Panc1 (cell line): ENCODE measurements at regions of chr17 and their contacts with region 1.

Region 1: DNA sequence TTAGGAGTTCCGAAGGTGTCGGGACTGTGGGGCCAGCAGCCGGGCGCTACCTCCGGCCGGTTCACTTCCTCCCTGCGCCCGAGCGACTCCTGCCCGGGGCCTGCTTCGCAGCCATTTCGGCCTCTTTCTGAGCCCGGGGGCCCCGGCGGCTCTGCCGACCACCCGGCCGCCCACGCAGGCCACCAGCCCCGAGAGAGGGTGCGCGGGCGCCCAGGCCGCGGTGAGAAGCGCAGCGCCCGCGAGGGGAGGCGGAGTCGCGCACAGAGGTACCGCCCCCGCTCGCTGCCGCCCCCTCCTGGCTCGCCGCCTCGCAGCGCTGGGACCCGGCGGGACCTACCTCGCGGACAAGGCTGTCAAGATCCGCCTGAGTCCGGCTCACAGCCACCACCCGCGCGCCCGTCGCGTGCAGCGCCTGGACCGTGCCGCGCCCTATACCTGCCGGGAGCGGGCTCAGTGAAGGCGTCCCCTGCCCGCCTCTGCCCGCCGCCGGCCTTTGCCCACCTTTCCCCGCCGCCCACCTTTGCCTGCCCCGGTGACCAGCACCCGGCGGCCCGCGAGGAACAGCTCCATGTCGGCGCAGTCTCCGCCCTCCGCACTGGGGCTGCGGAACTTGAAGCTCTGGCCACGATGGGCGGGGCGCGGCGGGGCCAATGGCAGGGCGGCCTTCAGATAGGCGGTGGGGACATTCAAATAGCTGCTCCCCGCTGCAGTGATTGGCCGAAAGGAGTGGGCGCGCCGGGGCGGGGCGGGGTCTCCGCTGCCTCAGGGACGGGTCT is at the start of gene DCXR:
- DNase-seq: peak; percentile 46
- ATAC-seq: peak; percentile 96
- H3K4me3 ChIP-seq: peak within 1 kb of the TSS; percentile 58 to 79
- H3K27ac ChIP-seq: peak within 1 kb of the TSS; percentile 83
- H3K4me1 ChIP-seq: peaks cover 16% of the 10 kb centered on the region
- H3K27me3 ChIP-seq: no peaks in the 10 kb centered on the region
- CTCF ChIP-seq: peak; percentile 99
- total RNA-seq, gene DCXR: 128 TPM

Region 2: GRCh38 chr17:81702971-81703746 is 334.1 kb before region 1 on chr17 and contains the start of gene MRPL12:
- CTCF ChIA-PET with region 1: no interaction called
- POLR2A ChIA-PET with region 1: no interaction called
- in situ Hi-C with region 1: no loop called
- intact Hi-C with region 1: no loop called
- DNase-seq: no peak
- ATAC-seq: peak; percentile 85
- H3K4me3 ChIP-seq: peak within 1 kb of the TSS; percentile 96 to 98
- H3K27ac ChIP-seq: peak within 1 kb of the TSS; percentile 96
- H3K4me1 ChIP-seq: peaks cover 17% of the 10 kb centered on the region
- H3K27me3 ChIP-seq: no peaks in the 10 kb centered on the region
- CTCF ChIP-seq: no peak
- total RNA-seq, gene MRPL12: 157 TPM

Region 3: DNA sequence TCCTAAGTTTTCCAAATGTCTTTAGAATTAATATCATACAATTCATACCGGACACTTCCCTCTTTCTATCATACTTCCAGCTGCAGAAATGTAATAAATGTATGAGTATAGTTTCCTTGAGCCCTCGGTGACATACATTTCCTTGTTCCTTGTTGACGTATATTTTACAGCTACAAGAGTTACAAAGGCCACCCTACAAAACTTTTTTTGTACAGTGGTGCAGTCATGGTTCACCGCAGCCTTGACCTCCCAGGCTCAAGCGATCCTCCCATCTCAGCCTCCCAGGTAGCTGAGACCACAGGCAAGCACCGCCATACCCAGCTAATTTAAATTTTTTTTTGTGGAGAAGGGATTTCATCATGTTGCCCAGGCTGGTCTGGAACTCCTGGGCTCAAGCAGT is 35.5 kb after region 1 on chr17:
- CTCF ChIA-PET with region 1: no interaction called
- POLR2A ChIA-PET with region 1: interaction called, 21 read pairs
- in situ Hi-C with region 1: no loop called
- intact Hi-C with region 1: no loop called
- DNase-seq: no peak
- ATAC-seq: no peak
- H3K4me3 ChIP-seq: no peak overlapping the region
- H3K27ac ChIP-seq: no peak overlapping the region
- H3K4me1 ChIP-seq: peaks cover 11% of the 10 kb centered on the region
- H3K27me3 ChIP-seq: no peaks in the 10 kb centered on the region
- CTCF ChIP-seq: no peak